Lower leg skin (tissue), 4 donors: ENCODE measurements at regions of chr3 and their contacts with region 1.

Region 1: DNA sequence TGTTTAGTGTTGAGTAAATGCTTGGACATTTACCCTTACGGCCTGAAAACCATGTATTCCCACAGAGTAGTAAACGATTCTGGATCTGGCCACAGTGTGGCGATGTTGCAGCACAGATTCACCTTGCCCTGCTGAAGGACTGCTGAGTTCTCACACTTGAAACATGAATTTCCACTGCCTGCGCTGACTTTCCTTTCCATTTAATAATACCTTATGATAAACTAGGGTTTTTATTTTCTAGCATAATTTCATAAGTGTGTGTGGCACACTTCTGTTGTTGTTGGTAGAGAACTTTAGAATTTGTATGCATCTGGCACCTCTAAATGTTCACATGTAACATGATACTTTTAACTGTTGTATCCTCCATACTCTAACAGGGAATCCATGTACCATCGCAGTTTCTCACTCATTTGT is 53.9 kb downstream of the C3orf38 start:
- DNase-seq: peak; percentile 56 to 87
- H3K4me3 ChIP-seq: no peak overlapping the region
- CTCF ChIP-seq: no peak
- POLR2A ChIP-seq: no peak

Region 2: DNA sequence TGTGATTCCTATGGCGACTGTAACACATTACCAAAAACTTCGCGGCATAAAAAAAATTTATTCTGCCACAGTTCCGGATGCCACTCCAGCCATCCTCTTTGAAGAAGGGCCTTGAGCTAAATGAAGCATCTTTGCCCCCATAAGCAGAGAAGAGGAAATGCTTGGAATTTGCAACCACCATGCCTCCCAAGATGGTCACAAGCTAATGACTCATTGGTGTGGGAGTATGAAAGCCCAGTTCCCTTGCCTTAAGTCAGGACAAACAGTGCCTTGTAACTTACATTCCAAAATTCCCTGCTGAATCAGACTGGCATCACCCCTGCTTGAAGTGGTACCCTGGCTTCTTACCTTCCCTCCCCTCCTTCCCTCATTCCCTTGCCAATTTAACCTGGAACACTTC is 1981.2 kb after region 1 on chr3:
- intact Hi-C with region 1: loop called (anchors 10 kb)
- DNase-seq: no peak
- H3K4me3 ChIP-seq: no peak overlapping the region
- CTCF ChIP-seq: no peak
- POLR2A ChIP-seq: no peak